Head of caudate nucleus (tissue), 42 donors: ENCODE measurements at regions of chr16 and their contacts with region 1.

Region 1: DNA sequence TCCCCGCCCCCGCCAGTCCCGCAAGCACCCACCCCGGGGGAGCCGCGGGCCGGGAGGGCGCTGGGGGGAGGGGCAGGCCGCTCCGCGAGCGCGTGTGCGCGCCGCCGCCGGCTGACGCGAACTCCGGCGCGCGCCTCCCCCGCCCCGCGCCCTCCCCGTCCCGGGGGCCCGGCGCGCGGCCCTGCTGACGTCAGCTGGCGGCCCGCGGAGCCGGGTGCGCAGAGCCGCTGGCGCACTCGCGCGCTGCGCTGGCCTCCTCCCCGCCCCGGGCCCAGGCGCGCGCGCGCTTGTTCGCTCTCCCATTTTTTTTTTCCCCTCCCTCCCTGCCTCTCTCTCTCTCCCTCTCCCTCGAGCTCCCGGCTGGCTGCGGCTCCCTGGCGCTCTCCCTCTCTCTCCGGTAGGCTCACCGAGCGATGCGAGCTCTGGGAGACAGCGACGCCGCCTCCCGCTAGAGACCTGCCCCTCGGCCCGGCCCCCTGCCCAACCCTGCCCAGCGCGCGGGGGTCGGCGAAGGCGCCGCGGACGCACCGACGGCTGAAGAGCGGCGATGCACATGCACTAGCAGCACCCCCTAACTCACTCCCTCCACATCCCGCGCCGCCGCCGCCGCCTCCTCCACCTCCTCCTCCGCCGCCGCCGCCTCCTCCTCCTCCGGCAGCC is at the start of gene GNAO1:
- DNase-seq: peak; percentile 40 to 93 (median 86)

Region 2: DNA sequence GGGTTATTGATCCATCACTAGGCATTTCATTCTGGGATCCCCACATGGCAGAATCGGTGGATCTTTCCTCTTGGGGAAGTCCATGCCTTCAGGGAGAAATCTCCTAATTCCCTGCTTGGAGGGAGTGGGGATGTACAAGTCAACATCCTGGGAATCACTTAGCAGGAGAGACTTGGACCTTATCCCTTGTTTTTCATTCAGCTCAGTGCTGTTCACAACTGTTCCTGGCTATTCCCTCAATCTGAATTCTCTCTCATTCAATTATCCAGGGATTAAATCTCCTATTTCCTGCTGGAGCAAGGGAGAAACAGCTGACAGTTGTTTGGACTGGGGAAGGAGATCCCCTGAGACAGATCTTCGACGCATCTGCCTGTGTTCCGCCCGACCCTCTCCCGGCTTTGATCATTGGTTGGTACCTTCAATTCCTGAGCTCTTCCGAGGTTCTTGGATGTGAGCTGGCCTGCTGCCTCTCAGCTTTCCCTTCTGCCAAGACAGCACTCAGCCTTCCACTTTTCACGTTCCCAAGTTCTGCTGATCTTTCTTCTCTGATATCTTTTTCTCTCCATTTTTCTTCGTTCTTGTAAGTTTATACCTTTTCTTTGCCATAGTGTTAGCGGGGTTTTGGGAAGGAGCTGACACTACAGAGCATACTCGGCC is 115.4 kb before region 1 on chr16:
- intact Hi-C with region 1: no loop called
- DNase-seq: no peak

Region 3: GRCh38 chr16:56237451-56237930 is 46.2 kb after region 1 on chr16:
- intact Hi-C with region 1: loop called (anchors 5 kb)
- DNase-seq: peak in 5 of 42 donors; percentile 26 to 78 (median 59)

Region 4: GRCh38 chr16:56281256-56281805 is 90.0 kb after region 1 on chr16:
- intact Hi-C with region 1: no loop called
- DNase-seq: peak in 4 of 42 donors; percentile 34 to 71 (median 58)

Region 5: DNA sequence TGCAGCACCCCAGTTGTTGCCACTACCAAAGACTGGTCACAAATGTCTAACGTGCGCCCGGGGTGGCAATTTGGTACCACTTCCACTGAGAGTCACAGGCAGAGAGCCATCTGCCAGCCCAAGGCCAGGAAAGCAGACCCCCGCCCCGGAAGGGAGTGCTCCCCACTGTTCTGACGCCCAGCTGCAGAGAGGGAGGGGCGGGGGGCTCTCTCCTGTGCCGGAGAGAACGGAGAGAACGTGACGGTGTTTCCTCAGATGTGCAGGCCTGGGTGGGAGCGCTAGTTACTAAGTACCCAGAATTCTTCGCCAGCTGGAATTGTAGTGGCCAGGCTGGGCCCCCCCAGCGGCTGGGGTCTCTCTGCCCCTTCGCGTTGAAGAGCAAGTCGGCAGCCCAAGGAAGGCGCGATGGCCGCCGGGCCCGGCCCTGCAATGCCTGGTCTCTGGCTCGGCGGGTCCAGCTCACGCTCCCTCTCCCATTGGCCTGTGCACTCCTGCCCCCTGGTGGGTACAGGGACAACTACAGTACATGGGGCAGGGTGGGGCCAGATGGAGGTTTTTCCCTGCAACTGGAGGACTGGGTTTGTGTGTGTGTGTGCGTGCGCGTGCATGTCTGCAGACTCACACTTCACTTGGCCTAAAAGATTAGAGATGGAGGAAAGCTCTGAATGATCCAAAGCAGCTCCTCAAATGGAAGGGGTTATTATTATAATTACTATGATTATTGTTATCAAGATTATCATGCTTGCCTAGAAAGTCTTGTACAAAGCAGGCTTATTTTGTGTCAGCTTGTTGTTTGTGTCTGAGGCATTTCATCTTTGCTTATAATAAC is 126.9 kb after region 1 on chr16:
- intact Hi-C with region 1: loop called (anchors 5 kb)
- DNase-seq: peak; percentile 77 to 97 (median 91)